Breast epithelium (tissue), 4 donors: ENCODE measurements at regions of chr1 and their contacts with region 1.

Region 1: GRCh38 chr1:190540366-190540765 is 62.7 kb upstream of the BRINP3 start:
- DNase-seq: no peak
- H3K4me3 ChIP-seq: no peak overlapping the region
- H3K27ac ChIP-seq: no peak overlapping the region
- H3K4me1 ChIP-seq: no peaks in the 10 kb centered on the region
- H3K27me3 ChIP-seq: no peaks in the 10 kb centered on the region
- CTCF ChIP-seq: no peak
- POLR2A ChIP-seq: no peak

Region 2: DNA sequence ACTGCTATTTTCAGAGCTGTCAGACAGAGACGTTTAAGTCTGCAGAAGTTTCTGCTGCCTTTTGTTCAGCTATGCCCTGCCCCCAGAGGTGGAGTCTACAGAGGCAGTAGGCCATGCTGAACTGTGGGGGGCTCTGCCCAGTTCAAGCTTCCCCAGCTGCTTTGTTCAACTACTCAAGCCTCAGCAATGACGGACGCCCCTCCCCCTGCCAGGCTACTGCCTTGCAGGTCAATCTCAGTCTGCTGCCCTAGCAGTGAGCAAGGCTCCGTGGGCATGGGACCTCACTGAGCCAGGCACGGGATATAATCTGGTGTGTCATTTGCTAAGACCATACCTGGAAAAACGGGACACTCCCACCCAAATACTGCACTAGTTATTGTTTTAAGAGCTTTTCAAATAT is 282.4 kb before region 1 on chr1:
- intact Hi-C with region 1: loop called (anchors 5 kb)
- DNase-seq: no peak
- H3K4me3 ChIP-seq: no peak overlapping the region
- H3K27ac ChIP-seq: no peak overlapping the region
- H3K4me1 ChIP-seq: no peaks in the 10 kb centered on the region
- H3K27me3 ChIP-seq: no peaks in the 10 kb centered on the region
- CTCF ChIP-seq: no peak
- POLR2A ChIP-seq: no peak